ENCODE measurements at regions of chr1 and their contacts with region 1.

Region 1: DNA sequence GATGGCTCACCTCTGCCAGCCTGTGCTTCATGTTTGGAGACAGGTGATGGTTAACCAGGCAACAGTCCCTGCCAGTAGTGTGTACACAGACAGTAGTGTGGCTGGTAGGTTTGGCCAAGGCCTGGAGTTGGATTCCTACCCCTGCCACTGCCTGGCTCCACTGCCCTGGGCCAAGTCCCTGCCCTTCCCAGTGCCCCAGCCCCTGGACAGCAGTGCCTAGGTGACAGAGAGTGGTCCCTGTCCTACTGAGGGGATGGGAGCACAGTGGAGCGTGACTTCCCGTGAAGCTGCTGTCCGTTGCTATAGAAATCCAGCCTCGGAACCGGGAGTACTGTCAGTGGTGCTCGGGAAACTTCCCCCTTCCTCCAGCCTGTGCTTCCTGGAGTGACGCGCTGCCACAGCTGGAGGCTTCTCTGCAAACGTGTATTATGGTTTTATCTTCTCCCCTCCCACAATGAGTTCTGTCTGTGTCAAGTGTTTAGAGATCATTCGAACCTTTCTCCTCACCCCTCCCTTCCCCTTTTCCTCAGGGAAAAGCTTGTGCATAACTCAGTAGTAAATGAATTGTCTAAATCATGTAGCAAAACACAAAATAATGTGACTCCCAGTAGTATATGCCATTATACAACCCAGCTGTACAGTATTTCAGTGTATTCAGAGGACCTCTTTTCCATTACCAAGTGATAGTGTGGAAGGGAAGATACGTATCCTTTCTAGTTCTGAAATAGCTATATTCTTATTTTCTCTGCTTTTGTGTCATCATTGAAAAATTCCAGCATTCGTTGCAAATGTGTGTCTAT is 73.4 kb downstream of the GALNT2 start:
- DNase-seq: no peak
- H3K4me3 Mint-ChIP-seq: no peak overlapping the region
- H3K27ac Mint-ChIP-seq: no peak overlapping the region
- H3K4me1 Mint-ChIP-seq: peaks cover 10% of the 10 kb centered on the region
- H3K27me3 Mint-ChIP-seq: no peaks in the 10 kb centered on the region
- CTCF ChIP-seq: no peak

Region 2: DNA sequence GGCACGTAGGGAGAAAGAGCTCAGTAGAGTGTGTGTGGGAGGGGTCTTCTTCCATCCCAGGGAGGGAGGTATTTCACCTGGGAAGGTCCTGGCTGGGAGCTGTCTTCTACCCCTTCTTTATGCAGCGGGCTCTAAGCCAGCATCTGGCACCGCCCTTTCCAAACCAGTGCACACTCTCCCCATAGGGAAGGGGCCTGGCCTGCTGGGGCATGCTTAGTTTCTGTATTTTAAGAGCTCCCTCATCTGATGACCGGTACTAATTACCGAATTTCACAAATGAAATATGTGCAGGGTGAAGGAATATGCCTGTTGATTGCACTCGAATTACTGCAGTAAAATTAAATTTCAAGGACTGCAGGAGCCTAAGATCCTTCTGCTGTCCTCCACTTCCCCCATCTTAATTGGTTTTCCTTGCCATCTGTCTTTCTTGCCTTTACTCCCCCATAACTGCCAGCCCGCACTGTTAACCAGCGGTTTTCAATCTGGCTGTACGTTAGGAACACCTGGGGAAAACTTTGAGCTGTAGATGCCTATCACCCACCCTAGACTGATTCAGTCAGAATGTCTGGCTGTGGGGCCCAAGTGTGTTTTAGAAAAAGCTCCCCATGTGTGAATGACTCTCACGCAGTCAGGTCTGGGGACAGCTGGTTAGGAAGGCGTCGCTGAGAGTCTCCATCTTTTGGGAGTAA is 53.2 kb before region 1 on chr1:
- CTCF ChIA-PET with region 1: no interaction called
- intact Hi-C with region 1: no loop called
- DNase-seq: no peak
- H3K4me3 Mint-ChIP-seq: no peak overlapping the region
- H3K27ac Mint-ChIP-seq: no peak overlapping the region
- H3K4me1 Mint-ChIP-seq: peaks cover 99% of the 10 kb centered on the region
- H3K27me3 Mint-ChIP-seq: no peaks in the 10 kb centered on the region
- CTCF ChIP-seq: no peak

Region 3: GRCh38 chr1:230099465-230099864 is 41.0 kb before region 1 on chr1:
- CTCF ChIA-PET with region 1: interaction called, 16 read pairs
- intact Hi-C with region 1: no loop called
- DNase-seq: no peak
- H3K4me3 Mint-ChIP-seq: no peak overlapping the region
- H3K27ac Mint-ChIP-seq: no peak overlapping the region
- H3K4me1 Mint-ChIP-seq: peaks cover 37% of the 10 kb centered on the region
- H3K27me3 Mint-ChIP-seq: no peaks in the 10 kb centered on the region
- CTCF ChIP-seq: no peak

Region 4: DNA sequence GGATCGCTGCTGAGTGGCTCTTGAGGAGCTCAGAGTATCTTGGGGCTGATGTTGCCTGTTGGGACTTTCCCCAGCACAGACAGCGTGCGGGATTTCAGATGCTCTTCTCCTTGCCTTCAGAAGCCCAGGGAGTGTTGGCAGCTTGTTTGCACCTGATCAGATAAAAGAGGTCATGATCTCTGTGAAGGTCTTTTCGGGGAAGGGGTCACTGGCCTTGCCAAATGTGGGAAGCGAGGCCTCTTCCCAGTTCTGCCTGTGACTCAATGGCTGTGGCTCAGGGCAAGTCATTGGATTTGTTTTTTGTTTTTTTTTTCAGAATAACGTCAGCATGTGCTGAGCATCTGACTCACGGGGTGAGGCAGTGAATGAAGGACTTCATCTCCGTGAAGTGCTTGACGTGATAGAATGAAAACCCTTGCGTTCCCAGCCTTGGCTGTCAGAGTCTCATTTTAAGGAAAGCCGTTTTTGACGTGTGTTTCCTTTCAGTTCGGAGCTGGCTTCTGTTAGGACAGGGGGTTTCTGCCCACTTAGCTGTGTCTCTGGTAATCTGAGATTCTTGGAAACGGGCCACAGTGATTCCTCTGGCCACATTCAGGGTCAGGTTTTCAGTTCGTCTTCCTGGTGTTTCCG is 26.7 kb before region 1 on chr1:
- CTCF ChIA-PET with region 1: interaction called, 3 read pairs
- intact Hi-C with region 1: loop called (anchors 1 kb)
- DNase-seq: no peak
- H3K4me3 Mint-ChIP-seq: no peak overlapping the region
- H3K27ac Mint-ChIP-seq: no peak overlapping the region
- H3K4me1 Mint-ChIP-seq: peaks cover 27% of the 10 kb centered on the region
- H3K27me3 Mint-ChIP-seq: no peaks in the 10 kb centered on the region
- CTCF ChIP-seq: no peak

Region 5: DNA sequence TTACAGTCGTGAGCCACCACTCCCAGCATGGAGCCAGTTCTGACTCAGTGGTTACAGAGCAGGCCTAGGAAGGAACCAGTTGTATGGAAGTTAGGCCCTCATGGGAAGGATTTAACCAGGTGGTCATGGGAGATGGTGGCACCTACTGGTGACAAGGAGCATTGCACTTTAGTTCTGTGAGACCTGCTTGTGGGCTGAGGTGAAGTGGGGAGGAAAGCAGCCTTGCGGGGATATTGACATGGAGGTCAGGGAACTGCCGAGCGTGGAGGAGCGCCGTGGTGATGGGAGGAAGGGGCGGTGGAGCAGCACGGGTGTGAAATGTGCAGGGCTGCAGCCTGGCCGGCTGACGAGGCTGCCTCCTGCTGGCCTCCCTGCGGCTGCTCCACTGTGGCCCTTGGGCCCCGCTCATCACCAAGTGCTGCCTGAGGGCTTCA is 27.0 kb after region 1 on chr1:
- CTCF ChIA-PET with region 1: no interaction called
- intact Hi-C with region 1: no loop called
- DNase-seq: peak; percentile 57
- H3K4me3 Mint-ChIP-seq: no peak overlapping the region
- H3K27ac Mint-ChIP-seq: peak overlapping the region; percentile 1
- H3K4me1 Mint-ChIP-seq: peaks cover 35% of the 10 kb centered on the region
- H3K27me3 Mint-ChIP-seq: no peaks in the 10 kb centered on the region
- CTCF ChIP-seq: peak; percentile 88

Region 6: DNA sequence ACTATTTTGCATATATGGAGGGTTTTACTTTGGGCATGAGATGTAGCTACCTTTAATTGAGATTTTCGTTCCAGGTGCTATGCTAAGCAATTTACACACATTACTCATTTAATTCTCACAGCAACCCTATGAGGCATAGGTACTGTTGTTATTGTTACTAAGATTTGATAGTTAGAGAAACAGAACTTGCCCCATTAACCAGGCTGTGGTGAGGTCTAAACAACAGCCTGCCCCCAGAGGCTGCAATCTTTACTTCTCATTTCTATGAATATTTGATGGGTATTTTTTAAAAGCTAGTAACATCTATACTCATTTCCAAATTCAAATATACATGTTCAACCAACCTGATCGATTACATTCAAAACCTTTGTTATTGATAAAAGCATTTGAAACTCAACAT is 82.3 kb after region 1 on chr1:
- CTCF ChIA-PET with region 1: no interaction called
- intact Hi-C with region 1: no loop called
- DNase-seq: no peak
- H3K4me3 Mint-ChIP-seq: no peak overlapping the region
- H3K27ac Mint-ChIP-seq: no peak overlapping the region
- H3K4me1 Mint-ChIP-seq: peaks cover 7% of the 10 kb centered on the region
- H3K27me3 Mint-ChIP-seq: no peaks in the 10 kb centered on the region
- CTCF ChIP-seq: no peak